ENCODE measurements at regions of chr1 and their contacts with region 1.

Region 1: DNA sequence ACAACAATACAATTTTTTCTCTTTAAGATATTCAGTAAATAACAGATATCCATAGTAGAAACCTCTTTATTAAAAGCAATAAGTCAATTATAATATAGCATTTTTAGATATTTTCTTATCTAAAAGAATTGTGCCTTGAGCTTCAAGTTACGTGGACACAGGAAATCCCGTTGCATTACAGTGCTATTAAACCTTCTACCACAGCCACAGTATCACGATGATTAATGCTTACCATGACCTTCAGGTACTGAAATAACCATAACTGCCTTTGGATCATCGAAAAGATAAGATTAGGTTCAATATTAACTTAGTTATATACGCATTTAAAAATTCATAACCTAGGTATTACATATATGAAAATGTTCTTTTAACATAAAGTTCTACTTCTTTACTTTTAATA is 17.9 kb downstream of the B3GALNT2 start:
- DNase-seq: peak; percentile 17

Region 2: GRCh38 chr1:234666761-234667160 is 819.6 kb before region 1 on chr1:
- CTCF ChIA-PET with region 1: interaction called, 10 read pairs
- POLR2A ChIA-PET with region 1: no interaction called
- DNase-seq: no peak

Region 3: DNA sequence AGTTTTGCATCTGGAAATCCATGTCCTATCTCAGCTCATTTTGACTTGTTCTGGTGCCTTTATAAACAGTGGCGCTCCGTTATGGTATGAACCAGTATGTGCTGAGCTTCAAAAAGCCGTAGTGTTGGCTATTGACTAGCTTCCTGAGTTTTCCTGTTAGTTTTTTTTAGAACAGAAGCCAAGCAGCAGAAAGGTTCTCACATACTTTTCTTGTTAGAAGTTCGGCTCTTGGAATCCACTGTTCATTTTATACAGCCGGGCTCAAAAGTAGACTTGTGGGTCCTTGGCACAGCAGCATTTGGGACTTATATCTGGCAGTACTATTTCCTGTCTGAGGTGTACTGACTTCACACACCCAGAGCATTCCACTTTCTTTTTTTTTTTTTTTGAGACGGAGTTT is 55.3 kb before region 1 on chr1:
- CTCF ChIA-PET with region 1: no interaction called
- POLR2A ChIA-PET with region 1: no interaction called
- DNase-seq: no peak

Region 4: DNA sequence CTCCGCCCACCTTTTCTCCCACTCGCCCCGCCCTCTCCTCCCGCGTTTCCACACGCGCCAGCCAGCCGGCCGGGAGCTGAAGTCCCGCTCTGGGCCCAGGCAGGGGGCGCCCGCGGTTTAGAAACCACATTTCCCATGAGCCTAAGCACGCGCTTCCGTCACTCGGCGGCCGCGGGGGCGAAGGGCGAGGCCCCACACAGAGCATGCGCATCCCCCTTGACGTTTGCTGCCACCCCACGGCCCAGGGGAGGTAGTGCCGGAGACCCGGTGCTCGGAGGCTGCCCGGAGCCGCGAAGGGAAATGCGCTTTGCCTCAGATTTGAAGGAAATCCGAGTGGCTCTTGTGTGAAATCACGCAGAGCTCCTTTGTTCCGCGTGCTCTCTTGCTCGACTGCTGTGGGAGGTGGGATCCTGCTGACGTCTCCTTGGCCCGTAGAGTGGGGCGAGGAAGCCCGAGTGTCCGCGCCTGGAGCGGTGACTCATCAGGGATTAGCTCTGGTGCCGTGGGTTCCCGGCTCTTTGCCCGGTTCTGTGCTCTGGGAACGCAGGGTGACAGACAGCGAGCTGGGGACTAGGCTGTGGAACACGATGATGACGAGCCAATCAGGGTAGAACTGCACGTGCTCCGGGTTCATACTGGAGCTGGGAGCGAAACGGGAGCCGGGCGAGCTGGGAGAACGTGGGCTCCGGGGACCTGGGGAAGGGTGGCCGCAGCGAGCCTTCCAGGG is 18.3 kb after region 1 on chr1:
- CTCF ChIA-PET with region 1: interaction called, 5 read pairs
- POLR2A ChIA-PET with region 1: interaction called, 11 read pairs
- DNase-seq: peak; percentile 99

Region 5: GRCh38 chr1:235532360-235532759 is 46.0 kb after region 1 on chr1:
- CTCF ChIA-PET with region 1: no interaction called
- POLR2A ChIA-PET with region 1: no interaction called
- DNase-seq: no peak

Region 6: GRCh38 chr1:235553112-235553551 is 66.8 kb after region 1 on chr1:
- CTCF ChIA-PET with region 1: no interaction called
- POLR2A ChIA-PET with region 1: no interaction called
- DNase-seq: no peak

Region 7: DNA sequence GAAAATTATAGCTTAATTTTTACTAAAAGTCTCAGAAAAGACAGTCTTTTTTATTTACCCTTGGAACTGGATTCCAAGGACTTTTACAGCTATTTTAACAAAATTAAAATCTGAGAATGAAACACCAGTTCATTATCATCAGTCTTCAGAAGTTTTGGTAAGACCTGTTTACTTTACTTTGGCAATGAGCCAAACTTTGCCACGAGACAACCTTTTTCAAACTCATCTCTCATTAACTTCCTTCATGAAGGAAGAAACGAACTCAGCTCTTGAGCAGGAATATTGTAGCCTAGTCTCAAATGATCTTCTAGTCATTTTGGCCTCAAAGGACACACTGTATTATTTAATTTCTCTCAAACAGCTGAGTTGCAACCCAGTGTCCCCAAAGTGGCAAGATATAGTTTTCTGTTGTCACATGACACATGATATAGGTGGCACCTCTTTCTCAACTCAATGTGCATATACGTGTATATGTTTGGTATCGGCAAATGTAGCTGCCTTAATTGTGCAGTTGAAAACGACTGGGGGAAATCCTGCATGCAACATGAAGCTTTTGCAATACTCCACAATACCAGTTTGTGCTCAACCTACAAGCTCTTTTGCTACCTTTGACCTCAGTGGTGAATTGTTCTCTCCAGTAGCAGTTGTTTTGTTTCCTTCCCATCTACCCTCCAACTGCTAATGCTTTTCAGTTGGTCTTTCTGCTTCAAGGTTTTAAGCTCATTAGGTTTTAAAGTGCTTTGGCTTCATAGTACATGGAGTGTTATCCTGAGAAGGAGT is 171.6 kb after region 1 on chr1:
- CTCF ChIA-PET with region 1: no interaction called
- POLR2A ChIA-PET with region 1: no interaction called
- DNase-seq: no peak

Measured in HEK293T (cell line).